ENCODE measurements at regions of chr3 and their contacts with region 1.

Region 1: DNA sequence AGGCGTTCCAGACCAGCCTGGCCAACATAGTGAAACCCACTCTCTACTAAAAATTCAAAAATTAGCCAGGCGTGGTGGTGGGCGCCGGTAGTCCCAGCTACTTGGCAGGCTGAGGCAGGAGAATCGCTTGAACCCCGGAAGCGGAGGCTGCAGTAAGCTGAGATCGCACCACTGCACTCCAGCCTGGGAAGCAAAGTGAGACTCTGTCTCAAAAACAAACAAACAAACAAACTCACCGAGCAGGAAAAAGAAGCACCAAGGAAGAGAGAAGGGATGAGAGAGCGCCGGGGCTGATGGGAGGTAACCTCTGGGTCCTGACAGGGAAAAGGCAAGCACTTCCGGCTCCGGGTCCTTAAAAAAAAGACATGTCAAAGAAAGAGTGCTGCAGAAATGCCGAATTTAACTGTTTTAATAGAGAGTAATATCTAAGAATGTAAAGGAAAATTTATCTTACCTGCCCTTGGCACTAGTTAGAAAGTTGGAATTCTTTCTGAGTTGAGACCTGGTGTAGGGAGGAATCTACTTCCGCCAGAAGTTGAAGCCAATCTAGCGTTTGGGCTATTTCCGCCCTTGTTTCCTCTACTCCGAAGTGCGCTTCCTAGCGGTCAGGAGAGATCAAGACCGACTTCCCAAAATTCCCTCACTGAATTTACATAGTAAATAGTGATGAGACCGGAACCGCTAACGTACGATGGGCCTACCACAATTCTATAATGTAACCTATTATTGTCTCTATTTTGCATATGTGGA is 29.1 kb downstream of the EFCAB12 start:
- H3K4me3 ChIP-seq: peak overlapping the region; percentile 62
- H3K27ac ChIP-seq: peak overlapping the region; percentile 67
- H3K4me1 ChIP-seq: no peaks in the 10 kb centered on the region
- CTCF ChIP-seq: peak; percentile 68

Region 2: GRCh38 chr3:129144786-129145185 is 254.5 kb before region 1 on chr3:
- CTCF ChIA-PET with region 1: no interaction called
- POLR2A ChIA-PET with region 1: no interaction called
- H3K4me3 ChIP-seq: no peak overlapping the region
- H3K27ac ChIP-seq: no peak overlapping the region
- H3K4me1 ChIP-seq: no peaks in the 10 kb centered on the region
- CTCF ChIP-seq: no peak

Region 3: DNA sequence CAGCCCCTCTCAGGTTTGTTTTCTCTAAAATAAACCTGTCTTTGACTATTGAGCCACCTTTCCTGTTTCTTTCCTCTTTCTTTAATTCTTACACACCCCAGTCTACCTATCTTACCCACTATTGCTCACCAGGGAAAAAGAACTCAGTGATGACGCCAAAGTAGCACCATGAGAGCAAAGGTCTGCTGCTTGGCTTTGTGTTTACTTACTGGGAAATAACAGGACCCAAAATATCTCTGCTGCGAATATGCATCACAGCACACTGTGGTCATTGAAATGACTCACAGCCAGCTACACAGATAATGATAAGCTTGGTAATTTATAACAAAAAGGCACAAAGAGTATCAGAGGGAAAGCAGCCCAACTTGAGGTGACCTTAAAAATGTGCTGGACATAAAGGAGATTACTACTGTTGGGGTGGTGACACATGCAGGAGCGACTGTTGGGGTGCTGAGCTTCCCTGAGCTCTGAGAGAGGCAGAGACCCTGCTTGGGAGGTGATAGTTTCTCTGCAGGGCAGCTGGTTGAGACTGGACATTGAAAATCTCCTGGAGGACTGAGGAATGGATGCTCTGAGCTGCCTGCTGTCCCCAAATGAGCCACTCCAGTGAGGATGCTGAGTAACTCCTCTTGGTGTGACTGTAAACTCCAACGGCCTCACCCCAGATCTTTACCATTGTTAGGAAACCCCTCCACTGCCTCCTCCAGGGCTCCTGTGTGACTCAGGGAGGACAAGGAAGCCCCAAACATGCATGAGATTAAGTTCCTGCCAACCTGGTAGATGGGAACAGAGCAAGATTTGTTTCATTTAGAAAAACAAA is 14.6 kb after region 1 on chr3:
- CTCF ChIA-PET with region 1: interaction called, 14 read pairs
- POLR2A ChIA-PET with region 1: no interaction called
- H3K4me3 ChIP-seq: no peak overlapping the region
- H3K27ac ChIP-seq: no peak overlapping the region
- H3K4me1 ChIP-seq: no peaks in the 10 kb centered on the region; the same call in 1 of the 2 replicates
- CTCF ChIP-seq: no peak